Esophagus muscularis mucosa (tissue), 4 donors: ENCODE measurements at regions of chr9 and their contacts with region 1.

Region 1: DNA sequence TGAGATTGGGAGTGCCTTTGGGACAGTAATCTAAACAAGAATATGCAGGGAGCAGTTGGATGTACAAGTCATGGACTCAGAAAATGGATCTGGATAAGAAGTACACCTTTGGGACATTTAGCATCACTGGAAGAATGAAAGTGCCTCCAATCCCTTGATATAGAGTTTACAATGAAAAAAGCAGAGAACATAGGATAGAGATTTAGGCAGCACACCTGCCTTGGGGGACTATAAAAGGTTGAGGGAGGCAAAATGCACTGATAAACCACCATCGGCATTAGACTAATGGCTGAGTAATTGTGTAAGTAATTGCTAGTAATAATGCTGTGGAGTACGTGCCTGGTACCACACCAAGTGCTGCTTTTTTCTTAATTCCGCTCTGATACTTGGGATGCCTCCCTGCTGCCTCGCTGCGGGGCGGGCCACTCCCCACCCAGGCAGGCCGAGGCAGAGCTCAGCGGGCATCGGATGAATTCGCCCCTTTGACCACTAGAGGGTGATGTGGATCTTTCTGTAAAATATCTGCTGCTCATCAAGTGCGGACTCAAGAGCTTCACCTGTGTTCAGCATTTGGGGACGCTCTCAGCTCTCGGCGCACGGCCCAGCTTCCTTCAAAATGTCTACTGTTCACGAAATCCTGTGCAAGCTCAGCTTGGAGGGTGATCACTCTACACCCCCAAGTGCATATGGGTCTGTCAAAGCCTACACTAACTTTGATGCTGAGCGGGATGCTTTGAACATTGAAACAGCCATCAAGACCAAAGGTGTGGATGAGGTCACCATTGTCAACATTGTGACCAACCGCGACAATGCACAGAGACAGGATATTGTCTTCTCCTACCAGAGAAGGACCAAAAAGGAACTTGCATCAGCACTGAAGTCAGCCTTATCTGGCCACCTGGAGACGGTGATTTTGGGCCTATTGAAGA is 99.9 kb downstream of the ANKRD18B start:
- DNase-seq: no peak
- H3K4me3 ChIP-seq: no peak overlapping the region
- H3K27ac ChIP-seq: no peak overlapping the region
- H3K4me1 ChIP-seq: peaks cover 0 to 14% (median 13%) of the 10 kb centered on the region in 4 donors
- H3K27me3 ChIP-seq: peaks cover 0 to 12% (median 0%) of the 10 kb centered on the region in 4 donors
- CTCF ChIP-seq: peak; percentile 84 to 93 (median 87)
- EP300 ChIP-seq: no peak
- POLR2A ChIP-seq: no peak

Region 2: DNA sequence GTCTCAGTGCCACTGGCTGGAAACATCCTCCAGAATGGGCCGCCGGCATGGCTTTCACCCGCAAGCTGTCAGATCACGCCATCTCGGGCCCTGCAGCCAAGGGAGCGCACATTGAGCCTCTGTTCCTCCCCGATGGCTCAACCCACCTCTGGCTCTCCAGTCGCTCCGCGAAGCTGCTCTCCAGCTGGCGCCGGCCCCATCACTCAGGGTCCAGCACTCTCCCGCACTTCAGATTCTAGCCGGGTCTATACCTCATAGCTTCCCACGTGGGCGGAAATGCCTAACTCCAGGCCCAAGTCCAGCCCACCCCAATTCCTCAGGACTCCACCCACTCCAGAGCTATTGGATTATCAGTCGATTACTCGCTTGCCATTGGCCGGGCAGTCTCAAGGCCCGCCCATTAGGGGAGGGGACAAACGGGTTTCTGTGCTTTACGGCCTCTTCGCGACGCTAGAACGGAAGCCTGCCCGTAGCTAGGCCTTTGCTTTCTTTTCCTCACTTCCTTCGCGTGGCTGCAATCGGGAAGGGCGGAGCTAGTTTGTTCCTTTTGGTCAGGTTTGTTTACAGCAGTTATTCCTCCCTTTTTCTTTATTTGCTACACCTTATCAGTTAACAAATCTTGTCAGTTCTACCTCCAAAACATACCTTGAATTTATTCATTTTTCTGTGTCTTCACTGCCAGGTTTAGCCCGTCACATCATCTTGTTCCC is 150.1 kb before region 1 on chr9 and contains the start of gene NOL6:
- intact Hi-C with region 1: no loop called
- DNase-seq: peak; percentile 99
- H3K4me3 ChIP-seq: peak within 1 kb of the TSS; percentile 79 to 96 (median 93)
- H3K27ac ChIP-seq: peak within 1 kb of the TSS; percentile 69 to 82 (median 71)
- H3K4me1 ChIP-seq: peaks cover 16 to 29% (median 20%) of the 10 kb centered on the region in 4 donors
- H3K27me3 ChIP-seq: no peaks in the 10 kb centered on the region
- CTCF ChIP-seq: peak in 1 of 3 experiments; percentile 27
- EP300 ChIP-seq: no peak
- POLR2A ChIP-seq: peak; percentile 30
- total RNA-seq, gene NOL6: 12.7 to 21.0 (median 16.5) TPM

Region 3: DNA sequence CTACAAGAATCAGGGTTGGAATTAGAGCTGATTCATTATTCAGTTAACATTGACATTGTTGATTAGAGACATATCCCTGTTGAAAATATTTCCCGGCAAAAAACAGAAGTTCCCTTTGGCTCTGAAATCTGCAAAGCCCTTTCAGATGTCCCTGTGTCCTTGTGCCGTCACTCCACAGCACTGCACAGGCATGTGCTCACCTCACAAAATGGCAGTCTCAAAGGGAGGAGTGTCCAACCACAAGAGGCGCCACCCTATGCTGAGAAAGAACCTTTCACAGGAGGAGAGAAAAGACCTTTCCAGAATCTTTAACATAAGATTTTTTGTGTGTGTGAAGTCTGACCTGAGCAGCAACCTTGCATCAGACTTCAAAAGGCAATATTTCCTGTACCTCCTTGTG is 58.6 kb after region 1 on chr9:
- intact Hi-C with region 1: loop called (anchors 5 kb)
- DNase-seq: no peak
- H3K4me3 ChIP-seq: no peak overlapping the region
- H3K27ac ChIP-seq: no peak overlapping the region
- H3K4me1 ChIP-seq: peaks cover 0 to 5% (median 0%) of the 10 kb centered on the region in 4 donors
- H3K27me3 ChIP-seq: no peaks in the 10 kb centered on the region
- CTCF ChIP-seq: no peak
- EP300 ChIP-seq: no peak
- POLR2A ChIP-seq: no peak

Region 4: DNA sequence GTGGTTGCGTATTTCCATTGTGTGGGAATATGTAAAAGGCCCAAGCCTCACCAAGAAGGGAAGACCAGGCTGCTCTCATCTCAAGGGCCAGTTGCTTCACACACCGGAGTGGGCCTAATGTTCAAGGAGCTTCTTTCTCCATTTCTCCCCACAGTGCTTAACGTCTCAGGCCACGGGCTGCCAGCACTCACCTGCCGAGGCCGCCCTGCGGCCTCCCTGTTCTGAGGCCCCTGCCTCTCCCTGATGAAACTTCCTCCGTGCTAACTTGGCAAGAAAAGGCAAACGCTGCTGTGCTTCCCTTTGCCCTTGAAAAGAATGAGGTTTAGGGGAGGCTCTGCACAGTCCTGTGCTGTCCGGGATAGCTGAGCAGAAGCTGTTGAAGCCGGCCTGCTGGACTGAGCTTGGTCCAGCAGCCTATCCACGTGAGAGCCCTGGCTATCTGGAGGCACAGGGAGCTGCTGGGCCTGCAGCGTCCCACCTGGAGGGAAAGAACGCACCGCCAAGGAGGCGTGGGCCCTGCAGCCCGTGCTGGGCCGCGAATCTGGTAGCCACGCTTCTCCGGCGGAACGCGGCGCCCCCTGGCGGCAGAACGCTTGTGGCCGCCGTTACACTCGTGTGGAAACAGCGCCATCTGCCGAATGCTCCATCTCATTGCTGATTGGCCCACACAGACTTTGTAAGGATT is 97.9 kb after region 1 on chr9:
- intact Hi-C with region 1: loop called (anchors 1 kb)
- DNase-seq: peak; percentile 95
- H3K4me3 ChIP-seq: no peak overlapping the region
- H3K27ac ChIP-seq: no peak overlapping the region
- H3K4me1 ChIP-seq: peaks cover 0 to 16% (median 15%) of the 10 kb centered on the region in 4 donors
- H3K27me3 ChIP-seq: peaks cover 0 to 12% (median 0%) of the 10 kb centered on the region in 4 donors
- CTCF ChIP-seq: peak; percentile 100
- EP300 ChIP-seq: no peak
- POLR2A ChIP-seq: no peak